ENCODE measurements at regions of chr13 and their contacts with region 1.

Region 1: GRCh38 chr13:20828539-20829364 is 55.0 kb upstream of the EEF1AKMT1 start:
- DNase-seq: peak in 3 of 5 donors; percentile 22 to 65 (median 58)
- H3K4me3 ChIP-seq: no peak overlapping the region
- H3K4me3 Mint-ChIP-seq: peak overlapping the region in 6 of 7 donors; percentile 23 to 73 (median 53)
- H3K27ac ChIP-seq: no peak overlapping the region
- H3K27ac Mint-ChIP-seq: peak overlapping the region; percentile 21 to 94 (median 68)
- H3K4me1 ChIP-seq: no peaks in the 10 kb centered on the region
- H3K4me1 Mint-ChIP-seq: peaks cover 13 to 18% (median 14%) of the 10 kb centered on the region in 3 donors
- H3K27me3 ChIP-seq: no peaks in the 10 kb centered on the region
- H3K27me3 Mint-ChIP-seq: no peaks in the 10 kb centered on the region

Region 2: DNA sequence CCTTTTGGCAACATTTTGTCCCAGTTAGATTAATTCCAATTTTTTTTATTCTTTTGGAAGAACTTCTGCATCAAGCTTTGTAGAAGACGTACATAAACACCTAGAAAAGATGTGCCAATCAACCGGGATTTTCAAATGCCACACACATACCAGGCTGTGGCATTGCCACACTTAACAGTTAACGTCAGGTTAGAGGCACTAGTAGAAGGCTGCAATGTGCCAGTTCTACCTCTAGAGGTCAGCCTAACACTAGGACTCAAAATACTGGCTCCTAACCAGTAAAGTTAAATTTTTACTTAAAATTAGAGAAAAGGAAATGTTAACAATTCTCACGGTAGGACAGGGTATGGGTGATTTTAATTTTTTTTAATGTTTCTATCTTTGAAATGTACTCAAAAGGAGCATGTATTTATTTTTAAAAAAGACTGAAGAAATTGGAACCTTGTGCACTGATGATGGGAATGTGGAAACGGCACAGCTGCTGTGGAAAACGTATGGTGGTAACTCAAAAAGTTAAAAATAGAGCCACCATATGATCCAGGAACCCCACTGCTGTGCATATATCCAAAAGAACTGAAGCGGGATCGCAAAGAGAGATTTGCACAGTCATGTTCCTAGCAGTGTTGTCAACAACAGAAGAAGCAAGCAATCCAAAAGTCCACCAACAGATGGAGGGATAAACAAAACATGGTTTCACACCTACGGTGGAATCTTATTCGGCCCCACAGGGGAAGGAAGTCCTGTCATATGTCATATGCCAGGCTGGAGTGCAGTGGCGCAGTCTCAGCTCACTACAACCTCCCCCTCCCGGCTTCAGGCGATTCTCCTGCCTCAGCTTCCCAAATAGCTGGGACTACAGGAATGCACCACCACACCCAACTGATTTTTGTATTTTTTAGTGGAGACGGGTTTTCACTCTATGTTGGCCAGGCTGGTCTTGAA is 333.4 kb before region 1 on chr13:
- CTCF ChIA-PET with region 1: interaction called, 52 read pairs
- POLR2A ChIA-PET with region 1: no interaction called
- DNase-seq: peak; percentile 20 to 70 (median 51)
- H3K4me3 ChIP-seq: no peak overlapping the region
- H3K4me3 Mint-ChIP-seq: no peak overlapping the region
- H3K27ac ChIP-seq: no peak overlapping the region
- H3K27ac Mint-ChIP-seq: no peak overlapping the region
- H3K4me1 ChIP-seq: no peaks in the 10 kb centered on the region
- H3K4me1 Mint-ChIP-seq: peaks cover 0 to 6% (median 3%) of the 10 kb centered on the region in 3 donors
- H3K27me3 ChIP-seq: no peaks in the 10 kb centered on the region
- H3K27me3 Mint-ChIP-seq: peaks cover 0 to 1% of the 10 kb centered on the region in 2 donors

Region 3: DNA sequence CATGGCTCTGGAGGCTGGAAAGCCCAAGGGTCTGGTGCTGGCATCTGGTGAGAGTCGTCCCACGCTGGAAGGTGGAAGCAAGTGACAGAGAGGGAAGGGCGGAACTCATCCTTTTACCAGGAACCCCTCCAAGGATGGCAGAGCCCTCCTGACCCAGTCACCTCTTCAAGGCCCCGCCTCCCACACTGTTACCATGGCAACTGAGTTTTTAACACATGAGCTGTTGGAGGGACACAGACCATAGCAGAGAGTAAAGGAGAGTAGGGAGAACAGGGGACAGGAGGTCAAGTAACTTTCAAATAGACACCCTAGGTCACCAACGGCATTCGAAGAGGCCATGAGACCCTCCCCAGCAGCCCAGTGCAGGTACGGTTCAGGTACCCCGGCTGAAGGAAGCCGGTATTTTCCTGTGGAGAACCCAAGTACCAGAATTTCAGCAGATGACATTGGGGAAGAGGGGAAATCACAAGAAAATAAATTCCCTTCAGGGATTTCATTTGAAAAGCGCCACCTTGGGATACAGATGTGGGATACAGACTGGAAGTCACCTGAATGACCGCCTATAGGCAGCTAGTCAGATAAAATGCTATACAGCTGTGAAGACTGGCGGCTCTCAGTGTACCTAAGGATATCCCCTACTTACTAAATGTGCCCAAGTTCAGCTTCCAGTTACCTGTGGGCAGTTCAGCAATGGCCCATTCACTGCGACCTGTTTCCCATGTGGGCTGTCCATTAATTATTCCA is 117.3 kb before region 1 on chr13:
- CTCF ChIA-PET with region 1: interaction called, 14 read pairs
- POLR2A ChIA-PET with region 1: no interaction called
- DNase-seq: no peak
- H3K4me3 ChIP-seq: no peak overlapping the region
- H3K4me3 Mint-ChIP-seq: no peak overlapping the region
- H3K27ac ChIP-seq: no peak overlapping the region
- H3K27ac Mint-ChIP-seq: no peak overlapping the region
- H3K4me1 ChIP-seq: peaks cover 7% of the 10 kb centered on the region
- H3K4me1 Mint-ChIP-seq: peaks cover 3 to 13% (median 10%) of the 10 kb centered on the region in 3 donors
- H3K27me3 ChIP-seq: no peaks in the 10 kb centered on the region
- H3K27me3 Mint-ChIP-seq: peaks cover 9% of the 10 kb centered on the region in 2 donors

Region 4: DNA sequence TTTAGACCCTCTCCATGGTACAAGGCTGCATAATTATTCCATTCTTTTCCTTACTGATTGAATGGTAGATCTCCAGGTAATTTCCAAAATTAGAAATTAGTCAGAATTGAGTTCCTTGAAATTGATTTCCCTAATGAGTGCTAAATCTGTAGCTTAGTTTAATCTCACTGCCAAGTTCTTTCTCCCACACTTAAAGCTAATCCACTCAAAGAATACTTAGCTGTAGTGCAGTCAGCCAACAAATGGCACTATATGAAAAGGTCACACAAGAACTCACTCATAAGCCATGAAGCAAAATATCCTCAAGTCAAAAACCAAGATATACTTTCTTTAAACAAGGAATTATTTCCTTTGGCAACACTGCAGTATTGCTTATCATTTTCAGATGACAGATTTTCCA is 11.8 kb after region 1 on chr13:
- CTCF ChIA-PET with region 1: interaction called, 14 read pairs
- POLR2A ChIA-PET with region 1: no interaction called
- DNase-seq: no peak
- H3K4me3 ChIP-seq: no peak overlapping the region
- H3K4me3 Mint-ChIP-seq: no peak overlapping the region
- H3K27ac ChIP-seq: no peak overlapping the region
- H3K27ac Mint-ChIP-seq: no peak overlapping the region
- H3K4me1 ChIP-seq: no peaks in the 10 kb centered on the region
- H3K4me1 Mint-ChIP-seq: peaks cover 0 to 1% (median 0%) of the 10 kb centered on the region in 3 donors
- H3K27me3 ChIP-seq: no peaks in the 10 kb centered on the region
- H3K27me3 Mint-ChIP-seq: no peaks in the 10 kb centered on the region

Region 5: GRCh38 chr13:20860844-20861243 is 32.1 kb after region 1 on chr13:
- CTCF ChIA-PET with region 1: interaction called, 10 read pairs
- POLR2A ChIA-PET with region 1: no interaction called
- DNase-seq: no peak
- H3K4me3 ChIP-seq: no peak overlapping the region
- H3K4me3 Mint-ChIP-seq: no peak overlapping the region
- H3K27ac ChIP-seq: no peak overlapping the region
- H3K27ac Mint-ChIP-seq: peak overlapping the region in 2 of 8 donors; percentile 1 to 11
- H3K4me1 ChIP-seq: no peaks in the 10 kb centered on the region
- H3K4me1 Mint-ChIP-seq: peaks cover 13 to 18% (median 17%) of the 10 kb centered on the region in 3 donors
- H3K27me3 ChIP-seq: no peaks in the 10 kb centered on the region
- H3K27me3 Mint-ChIP-seq: no peaks in the 10 kb centered on the region

Region 6: DNA sequence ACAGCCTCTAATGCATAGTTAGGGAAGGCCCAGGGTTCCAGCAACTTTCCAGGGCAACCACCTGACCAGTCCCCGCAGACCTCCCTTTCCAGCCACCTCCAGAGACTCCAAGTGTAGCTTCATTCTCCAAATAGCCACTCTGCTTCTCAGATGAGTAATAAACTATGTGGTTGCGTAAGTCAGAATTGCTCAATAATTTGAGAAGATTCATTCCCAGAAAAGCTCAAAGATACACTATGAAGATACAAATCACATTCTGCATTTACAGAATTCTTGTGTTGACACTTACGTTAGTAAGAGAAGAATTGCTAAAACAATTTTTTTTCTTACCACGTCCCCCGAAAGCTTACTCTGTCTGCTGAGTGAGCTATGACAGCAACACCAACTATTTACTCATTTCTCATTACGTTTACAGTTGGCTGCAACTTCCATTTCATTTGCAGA is 240.8 kb after region 1 on chr13:
- CTCF ChIA-PET with region 1: no interaction called
- POLR2A ChIA-PET with region 1: no interaction called
- DNase-seq: no peak
- H3K4me3 ChIP-seq: no peak overlapping the region
- H3K4me3 Mint-ChIP-seq: no peak overlapping the region
- H3K27ac ChIP-seq: no peak overlapping the region
- H3K27ac Mint-ChIP-seq: peak overlapping the region in 1 of 8 donors; percentile 38
- H3K4me1 ChIP-seq: peaks cover 4% of the 10 kb centered on the region
- H3K4me1 Mint-ChIP-seq: peaks cover 6 to 27% (median 17%) of the 10 kb centered on the region in 3 donors
- H3K27me3 ChIP-seq: no peaks in the 10 kb centered on the region
- H3K27me3 Mint-ChIP-seq: peaks cover 8 to 37% of the 10 kb centered on the region in 2 donors